ENCODE measurements at regions of chr19 and their contacts with region 1.

Region 1: DNA sequence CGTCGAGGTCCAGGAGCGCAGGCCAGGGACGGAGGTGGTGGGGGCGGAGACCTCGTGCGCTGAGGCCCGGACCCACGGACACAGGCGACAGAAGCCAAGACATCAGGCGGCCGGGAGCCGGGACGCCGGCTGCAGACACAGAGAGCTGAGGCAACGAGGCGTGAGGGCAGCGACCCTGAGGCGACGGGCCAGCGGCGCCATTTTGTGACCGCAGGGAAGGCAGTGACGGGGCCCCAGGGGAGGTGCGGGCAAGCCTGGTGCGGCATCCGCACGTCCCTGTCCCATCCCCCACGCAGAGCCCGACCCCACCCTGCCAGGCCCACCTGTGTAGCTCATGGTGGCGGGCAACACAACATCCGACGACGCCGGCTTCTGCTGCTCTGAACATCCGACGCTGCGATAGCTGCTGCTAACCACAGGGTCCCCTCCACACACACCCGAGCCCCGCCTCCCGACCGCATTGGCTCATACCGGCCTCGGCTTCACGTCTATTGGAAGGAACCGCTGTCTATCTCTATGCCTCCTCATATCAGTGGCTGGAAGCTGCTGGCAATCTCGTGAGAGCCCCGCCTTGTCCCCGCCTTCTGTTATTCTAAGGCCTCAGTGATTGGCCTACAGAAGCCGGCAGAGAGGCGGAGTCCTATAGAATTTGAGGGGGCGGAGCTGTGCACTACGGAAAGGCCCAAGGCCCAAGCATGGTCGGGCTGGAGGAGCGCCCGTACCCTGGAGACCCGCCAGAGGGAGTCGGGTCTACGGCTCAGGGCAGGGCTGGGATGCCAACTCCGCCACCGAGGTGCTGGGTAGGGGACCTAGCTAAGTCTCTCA is at the start of gene AKAP8L:
- DNase-seq: peak; percentile 100
- CTCF ChIP-seq: peak; percentile 85

Region 2: GRCh38 chr19:15379083-15379995 is 39.5 kb before region 1 on chr19 and contains the start of gene AKAP8:
- CTCF ChIA-PET with region 1: interaction called, 15 read pairs
- POLR2A ChIA-PET with region 1: interaction called, 18 read pairs
- DNase-seq: peak; percentile 99
- CTCF ChIP-seq: no peak

Region 3: GRCh38 chr19:15432629-15433518 is 14.1 kb after region 1 on chr19:
- CTCF ChIA-PET with region 1: interaction called, 44 read pairs
- POLR2A ChIA-PET with region 1: interaction called, 5 read pairs
- DNase-seq: peak; percentile 98
- CTCF ChIP-seq: no peak

Measured in GM10248 (cell line).